ENCODE measurements at regions of chr5 and their contacts with region 1.

Region 1: DNA sequence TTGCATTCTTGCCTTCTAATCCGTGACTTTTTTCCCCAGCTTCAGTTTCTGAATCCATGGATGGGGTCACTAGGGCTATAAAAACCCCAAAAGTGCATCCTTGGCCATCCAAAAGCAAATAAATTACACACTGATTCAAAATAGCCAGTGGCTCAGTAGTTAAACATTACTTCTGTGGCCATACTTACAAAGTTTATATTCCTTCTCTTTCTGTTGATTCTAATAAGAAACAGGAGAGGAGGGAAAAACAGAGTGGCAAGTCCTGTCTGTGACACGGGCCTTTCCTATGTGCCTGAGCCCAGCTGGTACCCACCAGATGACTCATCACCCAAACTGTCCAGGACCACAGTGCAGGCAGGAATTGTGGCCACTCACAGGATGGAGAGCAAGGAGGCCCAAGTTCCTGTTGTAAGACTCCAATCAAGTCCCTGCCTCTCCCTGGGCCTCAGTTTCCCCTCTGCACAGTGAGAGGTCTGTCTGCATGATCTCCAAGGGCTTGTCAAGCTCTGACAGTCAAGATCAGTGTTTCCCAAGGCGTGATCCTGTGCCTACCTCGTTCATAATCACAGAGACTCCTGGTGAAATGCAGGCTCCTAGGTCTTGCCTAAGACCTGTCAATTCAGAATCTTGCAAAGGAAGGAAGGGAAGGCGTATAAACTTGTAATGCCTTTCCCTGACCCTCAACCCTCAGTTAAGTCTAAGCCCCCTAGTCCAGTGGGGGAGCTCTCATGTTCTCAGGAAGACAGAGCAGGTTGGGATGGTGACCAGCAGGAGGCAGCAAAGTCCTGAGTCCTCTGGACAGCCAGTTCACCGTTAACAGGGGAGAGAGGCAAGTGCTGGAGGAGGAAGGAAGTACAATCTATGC is 29.5 kb downstream of the TNIP1 start:
- DNase-seq: peak; percentile 71 to 93 (median 85)
- ATAC-seq: peak; percentile 76
- H3K4me3 ChIP-seq: no peak overlapping the region
- H3K4me1 ChIP-seq: peaks cover 9% of the 10 kb centered on the region
- CTCF ChIP-seq: peak; percentile 66

Region 2: DNA sequence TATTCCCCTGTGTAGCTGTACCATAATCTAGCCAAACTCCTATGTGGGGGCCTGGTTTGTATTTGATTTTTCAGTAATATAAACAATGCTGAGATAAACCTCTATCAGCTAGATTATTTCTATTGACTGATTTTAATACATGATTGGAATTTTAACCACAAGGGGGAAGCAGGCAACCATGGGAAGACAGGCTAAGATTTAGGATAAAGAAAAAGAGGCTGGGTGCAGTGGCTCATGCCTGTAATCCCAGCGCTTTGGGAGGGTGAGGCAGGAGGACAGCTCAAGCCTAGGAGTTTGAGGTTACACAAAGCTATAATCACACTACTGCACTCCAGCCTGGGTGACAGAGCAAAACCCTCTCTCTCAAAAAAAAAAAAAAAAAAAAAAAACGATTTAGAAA is 49.0 kb before region 1 on chr5:
- intact Hi-C with region 1: loop called in 1 of 2 experiments (anchors 5 kb)
- DNase-seq: peak in 1 of 3 donors; percentile 43
- ATAC-seq: no peak
- H3K4me3 ChIP-seq: no peak overlapping the region
- H3K4me1 ChIP-seq: peaks cover 11% of the 10 kb centered on the region
- CTCF ChIP-seq: no peak

Region 3: GRCh38 chr5:151115274-151115905 is 64.1 kb after region 1 on chr5:
- intact Hi-C with region 1: loop called (anchors 1 to 5 kb)
- DNase-seq: peak; percentile 79 to 90 (median 87)
- ATAC-seq: peak; percentile 85
- H3K4me3 ChIP-seq: no peak overlapping the region
- H3K4me1 ChIP-seq: peaks cover 8% of the 10 kb centered on the region
- CTCF ChIP-seq: peak; percentile 87

Measured in mucosa of descending colon (tissue), 3 donors.